MCF 10A (cell line): ENCODE measurements at regions of chr2 and their contacts with region 1.

Region 1: GRCh38 chr2:27932396-27932795 is 41.9 kb downstream of the BABAM2 start:
- DNase-seq: peak; percentile 55
- H3K4me3 Mint-ChIP-seq: no peak overlapping the region
- H3K27ac Mint-ChIP-seq: peak overlapping the region; percentile 11
- H3K4me1 Mint-ChIP-seq: peaks cover 16% of the 10 kb centered on the region
- H3K27me3 Mint-ChIP-seq: no peaks in the 10 kb centered on the region
- CTCF ChIP-seq: no peak

Region 2: GRCh38 chr2:27798948-27799645 is 133.3 kb before region 1 on chr2:
- CTCF ChIA-PET with region 1: no interaction called
- POLR2A ChIA-PET with region 1: no interaction called
- intact Hi-C with region 1: loop called (anchors 1 kb)
- DNase-seq: peak; percentile 98
- H3K4me3 Mint-ChIP-seq: no peak overlapping the region
- H3K27ac Mint-ChIP-seq: peak overlapping the region; percentile 68
- H3K4me1 Mint-ChIP-seq: peaks cover 59% of the 10 kb centered on the region
- H3K27me3 Mint-ChIP-seq: no peaks in the 10 kb centered on the region
- CTCF ChIP-seq: no peak

Region 3: DNA sequence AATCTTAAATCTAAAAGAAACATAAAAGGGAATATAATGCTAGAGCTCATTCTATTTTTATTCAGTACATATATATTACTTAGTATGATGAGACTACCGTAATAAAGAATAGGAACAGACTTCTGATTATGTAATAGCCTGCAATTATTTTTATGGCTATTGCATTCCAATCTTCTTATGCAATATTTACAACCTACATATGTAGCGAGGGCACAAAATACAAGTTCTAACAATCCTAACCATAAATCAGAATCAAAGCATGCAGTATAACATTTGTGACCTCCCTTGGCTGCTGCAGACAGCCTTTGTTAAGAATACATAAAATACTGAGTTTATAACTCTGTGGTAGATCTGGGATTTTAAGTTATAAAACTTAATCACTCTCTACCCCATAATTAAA is 135.7 kb after region 1 on chr2:
- CTCF ChIA-PET with region 1: no interaction called
- POLR2A ChIA-PET with region 1: no interaction called
- intact Hi-C with region 1: no loop called
- DNase-seq: peak; percentile 43
- H3K4me3 Mint-ChIP-seq: no peak overlapping the region
- H3K27ac Mint-ChIP-seq: peak overlapping the region; percentile 39
- H3K4me1 Mint-ChIP-seq: peaks cover 19% of the 10 kb centered on the region
- H3K27me3 Mint-ChIP-seq: no peaks in the 10 kb centered on the region
- CTCF ChIP-seq: no peak